B cell (primary cell): ENCODE measurements at regions of chr18 and their contacts with region 1.

Region 1: DNA sequence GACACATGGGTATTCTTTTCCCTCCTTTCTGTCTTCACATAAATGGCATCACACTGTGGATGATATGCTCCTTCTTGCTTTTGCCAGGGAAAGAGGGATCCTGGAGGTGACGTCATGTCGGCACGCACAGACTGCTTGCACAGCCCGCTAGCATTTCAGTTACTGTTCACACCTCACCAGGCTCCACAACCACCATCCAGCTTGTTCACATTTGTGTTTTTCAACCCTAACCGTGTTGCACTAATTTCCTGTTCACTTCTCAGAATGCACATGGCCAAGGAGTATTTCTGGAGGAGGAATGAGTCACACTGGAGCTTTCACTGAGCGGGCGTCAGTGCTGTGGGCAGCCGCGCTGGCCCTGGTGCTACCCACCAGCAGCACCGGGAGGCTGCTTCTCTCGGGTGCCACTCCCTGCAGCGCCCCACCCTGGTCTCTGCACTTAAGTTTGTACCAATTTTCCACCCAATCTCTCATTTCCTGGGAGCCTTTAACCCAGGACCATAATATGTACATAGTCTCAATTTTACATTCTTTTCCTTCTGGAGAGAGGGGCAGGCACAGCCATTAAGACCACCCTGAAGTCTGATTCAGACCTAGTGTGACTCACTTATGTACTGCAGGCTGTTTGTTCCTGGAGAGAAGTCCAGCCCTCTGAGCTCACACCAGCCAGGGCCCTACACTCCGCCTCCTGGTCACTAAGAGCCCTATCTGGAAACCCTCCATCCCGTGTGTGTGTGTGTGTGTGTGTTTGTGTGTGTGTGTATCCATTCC is 65.1 kb downstream of the MBP start:
- DNase-seq: peak; percentile 48
- ATAC-seq: peak; percentile 24
- H3K4me3 ChIP-seq: peak overlapping the region in 1 of 5 experiments; percentile 49
- H3K4me3 Mint-ChIP-seq: peak overlapping the region; percentile 82
- H3K27ac ChIP-seq: peak overlapping the region; percentile 77 to 97
- H3K27ac Mint-ChIP-seq: peak overlapping the region; percentile 98
- H3K4me1 ChIP-seq: peaks cover 72 to 84% of the 10 kb centered on the region in 2 donors
- H3K4me1 Mint-ChIP-seq: peaks cover 99% of the 10 kb centered on the region
- H3K27me3 ChIP-seq: no peaks in the 10 kb centered on the region
- H3K27me3 Mint-ChIP-seq: no peaks in the 10 kb centered on the region
- CTCF ChIP-seq: no peak

Region 2: DNA sequence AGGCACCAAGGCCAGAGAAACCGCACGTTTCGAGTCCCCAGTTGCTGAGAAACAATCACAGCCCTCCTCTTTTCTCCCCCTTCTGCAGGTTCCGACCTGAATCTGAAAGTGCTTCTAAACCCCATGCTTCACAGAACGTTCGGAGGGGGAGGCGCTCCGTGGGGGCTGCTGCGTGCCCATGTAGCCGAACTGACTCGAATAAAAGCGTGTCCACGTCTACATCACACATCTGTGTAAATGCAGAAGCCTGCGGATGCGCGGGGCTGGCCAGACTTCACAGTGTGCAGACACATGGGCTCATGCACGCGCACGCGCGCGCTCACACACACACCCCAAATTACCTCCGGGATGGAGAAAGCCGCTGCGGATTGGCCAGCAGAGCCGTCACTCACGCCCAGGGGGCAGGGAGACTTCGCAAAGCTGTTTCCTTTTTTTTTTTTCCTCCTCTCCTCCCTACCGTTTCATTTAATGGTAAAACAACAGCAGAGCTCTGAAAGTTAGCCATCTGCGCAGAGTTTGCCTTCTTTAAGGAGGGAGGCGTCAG is 574.7 kb before region 1 on chr18:
- CTCF ChIA-PET with region 1: no interaction called
- POLR2A ChIA-PET with region 1: no interaction called
- intact Hi-C with region 1: loop called (anchors 10 kb)
- DNase-seq: peak; percentile 99
- ATAC-seq: peak; percentile 74
- H3K4me3 ChIP-seq: peak overlapping the region; percentile 62 to 97 (median 77)
- H3K4me3 Mint-ChIP-seq: peak overlapping the region; percentile 95
- H3K27ac ChIP-seq: peak overlapping the region; percentile 67 to 69
- H3K27ac Mint-ChIP-seq: peak overlapping the region; percentile 94
- H3K4me1 ChIP-seq: peaks cover 18 to 40% of the 10 kb centered on the region in 2 donors
- H3K4me1 Mint-ChIP-seq: peaks cover 56% of the 10 kb centered on the region
- H3K27me3 ChIP-seq: peaks cover 0 to 10% (median 3%) of the 10 kb centered on the region in 4 experiments
- H3K27me3 Mint-ChIP-seq: peaks cover 21% of the 10 kb centered on the region
- CTCF ChIP-seq: no peak

Region 3: GRCh38 chr18:77032181-77032701 is 35.2 kb before region 1 on chr18:
- CTCF ChIA-PET with region 1: no interaction called
- POLR2A ChIA-PET with region 1: no interaction called
- intact Hi-C with region 1: no loop called
- DNase-seq: no peak
- ATAC-seq: peak; percentile 36
- H3K4me3 ChIP-seq: no peak overlapping the region
- H3K4me3 Mint-ChIP-seq: peak overlapping the region; percentile 43
- H3K27ac ChIP-seq: peak overlapping the region in 1 of 2 donors; percentile 41
- H3K27ac Mint-ChIP-seq: peak overlapping the region; percentile 81
- H3K4me1 ChIP-seq: peaks cover 16 to 23% of the 10 kb centered on the region in 2 donors
- H3K4me1 Mint-ChIP-seq: peaks cover 37% of the 10 kb centered on the region
- H3K27me3 ChIP-seq: no peaks in the 10 kb centered on the region
- H3K27me3 Mint-ChIP-seq: no peaks in the 10 kb centered on the region
- CTCF ChIP-seq: no peak

Region 4: DNA sequence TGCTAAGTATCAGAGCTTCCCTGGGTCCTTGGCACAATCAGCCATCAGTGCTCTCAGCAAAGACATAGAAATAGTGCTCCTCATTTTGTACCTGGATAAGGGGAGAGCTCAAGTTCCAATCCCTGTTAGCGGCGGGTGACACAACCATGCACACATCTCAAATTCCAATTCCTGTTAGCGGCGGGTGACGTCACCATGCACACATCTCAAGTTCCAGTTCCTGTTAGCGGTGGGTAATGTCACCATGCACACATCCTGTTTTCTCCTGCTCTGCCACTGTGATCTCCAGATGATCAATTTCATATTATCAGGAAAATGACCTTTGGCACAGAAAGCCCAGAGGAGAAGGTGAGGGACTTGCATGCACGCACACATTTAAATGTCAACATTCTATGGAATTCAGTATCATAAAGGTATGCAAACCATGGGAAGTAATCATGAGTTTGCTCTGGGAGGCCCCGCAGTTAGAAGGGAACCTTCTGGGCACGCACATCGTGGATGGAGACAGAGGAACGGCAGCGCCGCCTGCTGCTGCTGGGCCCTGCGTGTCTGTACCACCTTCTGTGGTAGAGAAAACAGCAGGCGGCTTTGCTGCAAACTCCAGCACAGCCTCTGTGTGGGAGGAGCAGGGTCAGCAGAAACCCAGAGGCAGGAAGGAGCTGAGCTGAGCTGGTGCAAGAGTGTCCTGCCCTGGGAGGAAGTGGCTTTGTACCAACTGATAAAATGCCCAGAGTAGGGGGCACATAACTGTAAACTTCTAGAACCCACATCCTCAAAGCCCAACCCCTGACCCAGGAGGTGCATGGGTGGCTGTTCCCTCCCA is 12.7 kb before region 1 on chr18:
- CTCF ChIA-PET with region 1: interaction called, 91 read pairs
- POLR2A ChIA-PET with region 1: interaction called, 58 read pairs
- intact Hi-C with region 1: loop called (anchors 1 kb)
- DNase-seq: peak; percentile 91
- ATAC-seq: peak; percentile 69
- H3K4me3 ChIP-seq: peak overlapping the region; percentile 32 to 41 (median 38)
- H3K4me3 Mint-ChIP-seq: peak overlapping the region; percentile 89
- H3K27ac ChIP-seq: peak overlapping the region; percentile 92 to 96
- H3K27ac Mint-ChIP-seq: peak overlapping the region; percentile 96
- H3K4me1 ChIP-seq: peaks cover 56 to 61% of the 10 kb centered on the region in 2 donors
- H3K4me1 Mint-ChIP-seq: peaks cover 68% of the 10 kb centered on the region
- H3K27me3 ChIP-seq: no peaks in the 10 kb centered on the region
- H3K27me3 Mint-ChIP-seq: no peaks in the 10 kb centered on the region
- CTCF ChIP-seq: peak; percentile 64

Region 5: DNA sequence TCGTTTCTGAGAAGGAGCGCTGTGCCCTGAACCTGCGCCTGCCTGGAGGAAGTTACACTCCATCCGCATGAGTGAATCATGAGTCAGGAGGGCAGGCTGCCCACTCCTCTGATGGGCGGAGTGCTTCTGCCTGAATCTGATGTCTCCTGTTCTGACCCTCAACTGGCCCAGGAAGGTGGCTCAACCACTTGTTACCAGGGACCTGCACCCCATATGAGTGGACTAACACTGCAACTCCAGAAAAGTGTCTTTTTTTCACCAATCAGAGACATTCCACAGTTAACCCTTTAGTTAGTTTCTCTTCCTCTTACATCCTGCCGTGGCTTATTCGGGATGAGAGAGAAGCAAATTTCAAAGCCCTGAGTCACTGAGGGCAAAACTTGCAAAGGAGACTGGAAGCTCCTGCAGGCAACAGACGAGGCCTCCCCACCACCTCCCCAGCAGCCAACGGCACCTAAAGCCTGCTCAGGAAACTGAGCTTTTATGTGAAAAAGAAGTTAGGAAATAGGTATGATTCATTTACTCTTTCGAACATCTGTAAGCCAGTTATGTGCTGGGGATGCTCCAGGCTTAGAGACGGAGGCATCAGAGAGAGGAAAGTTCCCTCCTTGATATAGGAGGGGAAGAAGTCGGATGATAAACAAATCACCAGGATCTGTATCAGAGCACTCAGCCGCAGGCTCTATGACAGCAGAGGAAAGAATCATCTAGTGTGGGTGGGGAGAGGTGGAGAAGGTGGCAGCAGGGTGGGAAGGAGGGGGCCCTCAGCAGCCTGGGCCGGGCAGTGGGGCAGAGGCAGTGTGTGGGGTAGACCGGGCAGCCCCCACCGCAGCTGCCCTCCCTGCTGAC is 34.2 kb after region 1 on chr18:
- CTCF ChIA-PET with region 1: interaction called, 8 read pairs
- POLR2A ChIA-PET with region 1: interaction called, 6 read pairs
- intact Hi-C with region 1: loop called (anchors 5 kb)
- DNase-seq: peak; percentile 63
- ATAC-seq: peak; percentile 69
- H3K4me3 ChIP-seq: peak overlapping the region in 3 of 5 experiments; percentile 12 to 42 (median 25)
- H3K4me3 Mint-ChIP-seq: peak overlapping the region; percentile 84
- H3K27ac ChIP-seq: peak overlapping the region; percentile 43 to 58
- H3K27ac Mint-ChIP-seq: peak overlapping the region; percentile 89
- H3K4me1 ChIP-seq: peaks cover 65 to 78% of the 10 kb centered on the region in 2 donors
- H3K4me1 Mint-ChIP-seq: peaks cover 85% of the 10 kb centered on the region
- H3K27me3 ChIP-seq: no peaks in the 10 kb centered on the region
- H3K27me3 Mint-ChIP-seq: no peaks in the 10 kb centered on the region
- CTCF ChIP-seq: no peak

Region 6: GRCh38 chr18:77207540-77207939 is 140.1 kb after region 1 on chr18:
- CTCF ChIA-PET with region 1: interaction called, 7 read pairs
- POLR2A ChIA-PET with region 1: no interaction called
- intact Hi-C with region 1: loop called (anchors 5 kb)
- DNase-seq: peak; percentile 65
- ATAC-seq: peak; percentile 65
- H3K4me3 ChIP-seq: no peak overlapping the region
- H3K4me3 Mint-ChIP-seq: peak overlapping the region; percentile 70
- H3K27ac ChIP-seq: no peak overlapping the region
- H3K27ac Mint-ChIP-seq: peak overlapping the region; percentile 65
- H3K4me1 ChIP-seq: peaks cover 4 to 28% of the 10 kb centered on the region in 2 donors
- H3K4me1 Mint-ChIP-seq: peaks cover 30% of the 10 kb centered on the region
- H3K27me3 ChIP-seq: peaks cover 0 to 7% (median 0%) of the 10 kb centered on the region in 4 experiments
- H3K27me3 Mint-ChIP-seq: peaks cover 4% of the 10 kb centered on the region
- CTCF ChIP-seq: peak; percentile 70